Mammary epithelial cell (primary cell): ENCODE measurements at regions of chr3 and their contacts with region 1.

Region 1: DNA sequence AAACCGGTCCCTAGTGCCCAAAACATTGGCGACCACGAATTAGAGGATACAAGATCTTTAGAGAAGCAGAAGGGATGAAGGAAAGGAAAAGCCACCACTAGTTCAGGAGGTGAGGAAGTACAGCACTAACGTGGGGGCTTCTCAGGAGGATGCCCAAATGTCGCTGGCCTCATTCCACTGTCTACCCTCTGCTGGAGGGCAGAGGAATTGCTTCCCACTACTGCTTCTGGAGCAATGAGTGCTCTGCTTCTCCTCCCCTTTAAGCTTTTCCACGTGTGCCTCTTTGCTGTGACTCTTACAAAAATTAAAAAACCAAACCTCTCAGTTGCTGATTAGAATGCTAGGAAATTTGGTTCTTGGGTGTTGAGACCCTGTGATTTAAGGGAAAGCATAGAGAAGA is 281.3 kb downstream of the CLSTN2 start:
- DNase-seq: peak; percentile 4
- H3K4me3 ChIP-seq: no peak overlapping the region
- H3K27ac ChIP-seq: no peak overlapping the region
- H3K4me1 ChIP-seq: no peaks in the 10 kb centered on the region
- H3K27me3 ChIP-seq: peaks cover 5% of the 10 kb centered on the region
- CTCF ChIP-seq: peak; percentile 70 to 84

Region 2: DNA sequence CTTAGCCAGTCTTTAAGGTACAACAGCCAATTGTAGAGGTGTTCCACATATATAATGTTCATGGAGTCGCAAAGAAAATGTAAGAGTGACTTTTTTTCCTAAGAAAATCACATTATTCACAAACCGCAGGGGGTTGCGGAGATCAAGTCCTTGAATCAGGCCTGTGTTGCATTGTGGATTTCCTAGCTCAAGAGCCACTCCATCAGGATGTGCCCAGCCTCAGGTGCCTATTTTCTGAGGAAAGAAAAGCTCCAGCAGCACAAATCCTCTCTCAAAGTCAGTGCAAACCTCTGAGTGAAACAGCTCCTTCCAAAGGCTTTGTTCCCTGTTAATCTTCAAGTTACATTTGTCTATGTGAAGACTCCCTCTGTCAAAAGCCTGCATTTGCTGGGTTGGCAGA is 68.1 kb after region 1 on chr3:
- CTCF ChIA-PET with region 1: no interaction called
- dilution Hi-C with region 1: loop called (anchors 5 kb)
- in situ Hi-C with region 1: no loop called
- intact Hi-C with region 1: no loop called
- DNase-seq: no peak
- H3K4me3 ChIP-seq: no peak overlapping the region
- H3K27ac ChIP-seq: no peak overlapping the region
- H3K4me1 ChIP-seq: peaks cover 13% of the 10 kb centered on the region
- H3K27me3 ChIP-seq: peaks cover 2% of the 10 kb centered on the region
- CTCF ChIP-seq: no peak